ENCODE measurements at regions of chr11 and their contacts with region 1.

Region 1: DNA sequence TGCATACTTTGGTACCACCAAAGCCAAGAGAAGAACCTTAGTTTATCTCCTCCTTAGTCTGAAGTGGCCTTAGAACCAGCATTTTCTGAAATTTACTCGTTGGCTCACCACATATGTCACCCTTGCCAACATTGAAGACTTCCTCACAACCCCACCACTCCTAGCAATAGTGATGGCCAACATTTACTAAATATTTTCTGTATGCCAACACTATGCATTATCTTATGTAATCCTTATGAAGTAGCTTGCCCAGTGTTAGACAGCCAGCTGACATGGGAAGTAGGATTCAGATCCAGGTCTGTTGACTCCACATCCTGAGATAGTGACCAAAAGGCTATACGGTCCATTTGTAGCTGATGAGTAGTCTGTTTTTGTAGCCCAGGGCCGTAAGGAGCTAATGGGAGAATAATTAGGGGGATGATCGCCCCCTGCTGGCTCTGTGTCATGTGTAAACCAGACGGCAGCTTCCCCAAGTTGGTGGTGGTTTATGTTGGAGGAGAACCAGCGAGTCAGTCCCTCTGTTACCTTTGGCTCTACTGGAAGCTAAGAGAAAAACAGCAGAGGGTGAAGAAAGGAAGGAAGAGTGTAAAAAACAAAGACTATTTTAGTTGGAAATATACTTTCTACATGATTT is 120.5 kb upstream of the RASSF10 start:
- DNase-seq: peak; percentile 73
- H3K4me3 ChIP-seq: no peak overlapping the region
- H3K27ac ChIP-seq: no peak overlapping the region
- H3K4me1 ChIP-seq: no peaks in the 10 kb centered on the region
- CTCF ChIP-seq: peak; percentile 88

Region 2: DNA sequence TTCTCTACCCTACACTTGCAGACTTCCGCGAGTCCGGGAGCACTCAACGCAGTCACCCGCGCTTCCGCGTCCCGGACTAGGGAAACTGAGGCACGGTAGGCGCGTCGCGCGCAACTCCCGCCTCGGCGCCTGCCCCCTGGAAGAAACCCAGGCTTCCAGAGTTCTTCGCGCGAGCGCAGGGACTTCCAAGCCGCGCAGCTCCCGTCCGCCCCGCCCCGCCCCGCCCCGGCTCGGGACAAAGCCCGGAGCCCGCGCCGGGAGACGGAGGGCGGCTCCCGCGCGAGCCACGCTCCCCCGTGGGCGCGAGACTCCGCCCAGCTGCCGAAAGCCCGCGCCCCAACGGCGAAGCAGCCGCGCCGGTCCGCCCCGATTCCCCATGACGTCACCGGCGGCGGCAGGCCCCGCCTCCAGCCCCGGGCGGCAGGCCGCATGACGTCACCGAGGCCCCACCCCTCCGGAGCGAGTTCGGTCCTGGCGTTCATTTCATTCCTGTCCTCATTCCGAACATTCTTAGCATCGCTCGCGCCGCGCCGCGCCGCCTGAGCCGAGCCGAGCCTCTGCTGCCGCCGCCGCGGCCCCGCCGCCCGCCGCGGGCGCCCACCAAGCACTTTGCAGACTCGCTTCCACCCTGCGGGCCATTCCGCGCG is 214.6 kb before region 1 on chr11 and contains the start of gene TEAD1:
- CTCF ChIA-PET with region 1: no interaction called
- POLR2A ChIA-PET with region 1: no interaction called
- intact Hi-C with region 1: loop called (anchors 10 kb)
- DNase-seq: peak; percentile 76
- H3K4me3 ChIP-seq: peak within 1 kb of the TSS; percentile 73
- H3K27ac ChIP-seq: peak within 1 kb of the TSS; percentile 19
- H3K4me1 ChIP-seq: peaks cover 3% of the 10 kb centered on the region
- CTCF ChIP-seq: no peak
- total RNA-seq, gene TEAD1: 10.8 and 11.5 TPM in 2 replicates

Region 3: DNA sequence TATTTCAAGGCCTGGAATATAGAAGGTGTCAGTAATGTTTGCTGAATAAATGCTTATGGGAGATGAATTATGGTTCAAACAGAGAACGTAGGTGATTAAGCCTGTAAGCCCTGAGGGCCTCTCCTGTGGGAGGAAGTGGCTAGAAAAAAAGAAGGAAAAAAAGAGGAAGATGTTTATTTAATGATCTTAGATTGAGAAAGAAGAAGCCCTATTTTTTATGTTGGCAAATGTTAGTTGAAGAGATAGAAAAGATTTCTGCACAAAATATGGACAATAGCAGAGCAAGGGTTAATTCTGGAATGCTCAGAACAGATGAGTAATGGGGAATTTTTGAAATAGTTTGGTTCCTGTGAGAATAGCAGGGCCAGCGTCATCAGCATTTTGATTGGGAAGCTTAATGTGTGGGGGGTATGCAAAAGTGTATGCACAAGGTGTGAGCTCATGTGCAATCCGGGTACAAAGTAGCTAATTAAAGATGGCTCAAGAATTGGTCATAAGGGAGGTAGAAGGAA is 118.8 kb before region 1 on chr11:
- CTCF ChIA-PET with region 1: no interaction called
- POLR2A ChIA-PET with region 1: no interaction called
- intact Hi-C with region 1: no loop called
- DNase-seq: no peak
- H3K4me3 ChIP-seq: no peak overlapping the region
- H3K27ac ChIP-seq: no peak overlapping the region
- H3K4me1 ChIP-seq: peaks cover 44% of the 10 kb centered on the region
- CTCF ChIP-seq: no peak